ENCODE measurements at regions of chr12 and their contacts with region 1.

Region 1: GRCh38 chr12:2783936-2784600 is 10.7 kb upstream of the FKBP4 start:
- DNase-seq: peak; percentile 54
- ATAC-seq: peak; percentile 96
- H3K4me3 Mint-ChIP-seq: peak overlapping the region; percentile 52
- H3K27ac Mint-ChIP-seq: no peak overlapping the region
- H3K4me1 Mint-ChIP-seq: peaks cover 10% of the 10 kb centered on the region
- H3K27me3 Mint-ChIP-seq: peaks cover 18% of the 10 kb centered on the region
- CTCF ChIP-seq: peak; percentile 92

Region 2: GRCh38 chr12:2682296-2683251 is 101.5 kb before region 1 on chr12:
- CTCF ChIA-PET with region 1: interaction called, 64 read pairs
- POLR2A ChIA-PET with region 1: interaction called, 5 read pairs
- intact Hi-C with region 1: loop called (anchors 2 kb)
- DNase-seq: peak; percentile 72
- ATAC-seq: peak; percentile 77
- H3K4me3 Mint-ChIP-seq: no peak overlapping the region
- H3K27ac Mint-ChIP-seq: peak overlapping the region; percentile 87
- H3K4me1 Mint-ChIP-seq: peaks cover 7% of the 10 kb centered on the region
- H3K27me3 Mint-ChIP-seq: no peaks in the 10 kb centered on the region
- CTCF ChIP-seq: peak; percentile 68

Region 3: GRCh38 chr12:2691006-2691344 is 93.1 kb before region 1 on chr12:
- CTCF ChIA-PET with region 1: interaction called, 37 read pairs
- POLR2A ChIA-PET with region 1: interaction called, 4 read pairs
- intact Hi-C with region 1: no loop called
- DNase-seq: peak; percentile 84
- ATAC-seq: peak; percentile 84
- H3K4me3 Mint-ChIP-seq: peak overlapping the region; percentile 82
- H3K27ac Mint-ChIP-seq: peak overlapping the region; percentile 90
- H3K4me1 Mint-ChIP-seq: peaks cover 32% of the 10 kb centered on the region
- H3K27me3 Mint-ChIP-seq: no peaks in the 10 kb centered on the region
- CTCF ChIP-seq: peak; percentile 34